Mucosa of descending colon (tissue), 3 donors: ENCODE measurements at regions of chr4 and their contacts with region 1.

Region 1: GRCh38 chr4:168585168-168586091 is 88.6 kb downstream of the PALLD start:
- DNase-seq: peak; percentile 58 to 90 (median 80)
- ATAC-seq: peak; percentile 93
- H3K4me3 ChIP-seq: no peak overlapping the region
- H3K4me1 ChIP-seq: no peaks in the 10 kb centered on the region
- CTCF ChIP-seq: peak; percentile 51

Region 2: DNA sequence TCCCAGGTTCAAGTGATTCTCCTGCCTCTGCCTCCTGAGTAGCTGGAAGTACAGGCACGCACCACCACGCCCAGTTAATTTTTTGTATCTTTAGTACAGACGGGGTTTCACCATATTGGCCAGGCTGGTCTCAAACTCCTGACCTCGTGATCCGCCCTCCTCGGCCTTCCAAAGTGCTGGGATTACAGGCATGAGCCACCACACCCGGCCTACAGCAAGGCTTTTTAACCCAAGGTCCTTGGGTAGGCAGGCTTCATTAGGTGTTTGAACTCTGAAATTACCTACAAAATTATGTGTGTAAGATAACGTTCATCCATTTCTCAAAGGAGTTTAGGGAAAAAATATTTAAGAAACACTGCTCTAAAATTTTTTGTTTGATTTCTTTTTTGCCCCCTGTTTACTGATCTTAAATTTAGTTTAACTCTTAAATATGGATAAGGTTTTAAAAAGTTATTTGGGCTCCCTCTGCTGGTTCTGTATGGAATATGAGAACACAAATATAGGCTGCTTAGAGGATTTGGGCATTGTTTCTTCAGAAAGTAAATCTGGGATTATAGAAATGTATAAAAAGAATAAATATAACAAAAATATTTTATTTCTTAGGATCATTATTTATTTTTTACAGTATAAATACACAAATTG is 331.8 kb after region 1 on chr4:
- intact Hi-C with region 1: loop called in 1 of 2 experiments (anchors 10 kb)
- DNase-seq: peak in 1 of 3 donors; percentile 48
- ATAC-seq: no peak
- H3K4me3 ChIP-seq: no peak overlapping the region
- H3K4me1 ChIP-seq: no peaks in the 10 kb centered on the region
- CTCF ChIP-seq: peak; percentile 27